ENCODE measurements at regions of chr21 and their contacts with region 1.

Region 1: DNA sequence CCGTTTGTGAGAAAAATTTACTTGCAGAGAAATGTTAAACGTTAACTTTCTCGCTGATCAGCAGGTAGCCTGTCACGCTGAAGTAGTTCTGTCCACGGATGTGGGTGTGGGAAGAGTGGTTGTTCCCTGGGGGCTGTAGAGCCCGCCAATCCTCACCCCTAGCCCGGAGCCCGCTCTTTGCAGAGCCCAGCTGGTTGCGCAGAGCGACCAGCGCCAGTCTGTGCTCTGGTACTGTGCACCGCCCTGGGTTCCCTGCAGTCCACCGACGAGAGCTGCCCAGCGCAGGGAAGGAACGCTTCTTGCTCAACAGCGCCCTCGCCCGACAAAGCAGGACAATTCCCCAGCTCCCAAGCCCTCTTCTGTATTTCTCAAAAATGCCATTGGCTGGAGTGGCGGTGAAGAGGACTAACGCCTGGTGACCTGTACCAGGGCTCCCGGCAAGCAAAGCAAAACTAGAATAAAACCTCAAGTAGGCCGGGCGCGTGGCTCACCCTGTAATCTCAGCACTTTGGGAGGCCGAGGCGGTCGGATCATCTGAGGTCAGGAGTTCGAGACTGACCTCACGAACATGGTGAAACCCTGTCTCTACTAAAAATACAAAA is 3.3 kb downstream of the RIPPLY3 start:
- DNase-seq: peak; percentile 42 to 77 (median 71)
- ATAC-seq: peak; percentile 94
- H3K4me3 ChIP-seq: no peak overlapping the region
- H3K4me3 Mint-ChIP-seq: peak overlapping the region; percentile 45 to 80 (median 69)
- H3K27ac ChIP-seq: no peak overlapping the region
- H3K27ac Mint-ChIP-seq: no peak overlapping the region
- H3K4me1 ChIP-seq: peaks cover 4 to 7% of the 10 kb centered on the region in 2 donors
- H3K4me1 Mint-ChIP-seq: peaks cover 0 to 19% (median 16%) of the 10 kb centered on the region in 7 donors
- H3K27me3 ChIP-seq: no peaks in the 10 kb centered on the region
- H3K27me3 Mint-ChIP-seq: peaks cover 43 to 51% (median 47%) of the 10 kb centered on the region in 5 donors

Region 2: DNA sequence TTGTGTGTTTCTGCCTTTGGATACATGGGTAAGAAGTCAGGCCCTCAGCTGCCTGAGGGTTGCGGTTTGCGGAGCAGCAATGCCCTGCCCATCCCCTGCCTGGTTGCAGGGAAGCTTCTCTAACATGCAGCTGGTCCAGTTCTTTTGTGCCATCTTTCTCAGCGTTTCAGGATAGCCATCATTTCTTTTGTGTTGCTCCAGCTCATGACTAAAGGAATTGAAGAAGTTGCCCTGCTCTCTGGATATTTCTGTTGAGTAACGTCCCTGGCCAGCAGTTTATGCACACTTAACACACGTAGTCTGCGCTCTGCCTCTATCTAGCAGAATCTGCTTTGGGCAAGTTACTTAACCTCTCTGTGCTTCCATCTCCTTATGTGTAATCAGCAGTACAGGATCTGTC is 791.1 kb before region 1 on chr21:
- CTCF ChIA-PET with region 1: no interaction called
- POLR2A ChIA-PET with region 1: no interaction called
- intact Hi-C with region 1: no loop called
- DNase-seq: no peak
- ATAC-seq: no peak
- H3K4me3 ChIP-seq: no peak overlapping the region
- H3K4me3 Mint-ChIP-seq: no peak overlapping the region
- H3K27ac ChIP-seq: no peak overlapping the region
- H3K27ac Mint-ChIP-seq: peak overlapping the region in 1 of 9 donors; percentile 73
- H3K4me1 ChIP-seq: no peaks in the 10 kb centered on the region
- H3K4me1 Mint-ChIP-seq: no peaks in the 10 kb centered on the region
- H3K27me3 ChIP-seq: no peaks in the 10 kb centered on the region
- H3K27me3 Mint-ChIP-seq: no peaks in the 10 kb centered on the region

Region 3: GRCh38 chr21:36630485-36631206 is 379.2 kb before region 1 on chr21:
- CTCF ChIA-PET with region 1: interaction called, 5 read pairs
- POLR2A ChIA-PET with region 1: no interaction called
- intact Hi-C with region 1: loop called (anchors 2 to 10 kb)
- DNase-seq: peak in 8 of 9 donors; percentile 14 to 57 (median 41)
- ATAC-seq: peak; percentile 54
- H3K4me3 ChIP-seq: no peak overlapping the region
- H3K4me3 Mint-ChIP-seq: no peak overlapping the region
- H3K27ac ChIP-seq: no peak overlapping the region
- H3K27ac Mint-ChIP-seq: no peak overlapping the region
- H3K4me1 ChIP-seq: no peaks in the 10 kb centered on the region
- H3K4me1 Mint-ChIP-seq: no peaks in the 10 kb centered on the region
- H3K27me3 ChIP-seq: no peaks in the 10 kb centered on the region
- H3K27me3 Mint-ChIP-seq: peaks cover 0 to 6% (median 3%) of the 10 kb centered on the region in 5 donors

Region 4: DNA sequence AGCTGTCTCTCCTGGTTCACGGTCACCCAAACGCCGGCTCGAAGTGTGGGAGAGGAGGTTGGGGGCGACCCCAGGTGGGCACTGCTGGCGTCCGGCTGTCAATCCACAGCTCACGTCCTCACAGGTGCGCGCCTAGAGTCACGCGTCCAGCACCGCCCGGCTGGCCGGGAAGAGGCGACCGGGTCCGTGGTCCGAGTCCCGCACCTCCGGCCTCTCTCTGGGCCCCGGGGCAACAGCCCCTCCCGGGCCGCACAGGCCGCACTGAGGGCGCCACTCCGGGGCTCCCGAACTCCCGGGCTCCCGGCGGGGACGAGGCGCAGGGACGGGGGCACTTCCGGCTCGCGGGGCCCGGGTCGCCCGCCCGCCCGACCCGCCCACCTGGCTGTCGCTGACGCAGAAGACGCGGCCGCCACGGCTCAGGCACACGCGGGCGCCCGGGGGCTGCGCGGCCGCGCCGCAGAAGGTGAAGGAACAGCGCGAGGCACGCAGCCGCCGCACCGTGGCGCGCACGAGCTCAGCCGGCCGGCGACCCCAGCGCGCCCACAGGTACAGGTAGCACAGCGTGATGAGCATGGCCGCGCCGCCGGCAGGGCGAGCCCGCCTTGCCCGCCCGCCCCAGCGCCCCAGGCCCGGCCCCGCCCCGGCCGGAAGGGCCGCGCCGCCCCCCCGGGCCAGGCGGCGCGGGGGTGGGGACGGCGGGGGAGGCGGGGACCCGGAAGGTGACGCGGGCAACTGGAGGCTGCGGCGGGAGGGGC is 43.6 kb before region 1 on chr21 and contains the start of gene HLCS:
- CTCF ChIA-PET with region 1: interaction called, 4 read pairs
- POLR2A ChIA-PET with region 1: interaction called, 5 read pairs
- intact Hi-C with region 1: loop called (anchors 1 to 5 kb)
- DNase-seq: peak; percentile 62 to 79 (median 72)
- ATAC-seq: peak; percentile 93
- H3K4me3 ChIP-seq: peak within 1 kb of the TSS; percentile 52
- H3K4me3 Mint-ChIP-seq: peak within 1 kb of the TSS; percentile 80 to 91 (median 85)
- H3K27ac ChIP-seq: peak within 1 kb of the TSS; percentile 75
- H3K27ac Mint-ChIP-seq: peak within 1 kb of the TSS; percentile 77 to 92 (median 91)
- H3K4me1 ChIP-seq: peaks cover 0 to 6% of the 10 kb centered on the region in 2 donors
- H3K4me1 Mint-ChIP-seq: peaks cover 8 to 25% (median 12%) of the 10 kb centered on the region in 7 donors
- H3K27me3 ChIP-seq: no peaks in the 10 kb centered on the region
- H3K27me3 Mint-ChIP-seq: no peaks in the 10 kb centered on the region
- total RNA-seq, gene HLCS: 8.8 to 19.3 (median 12.2) TPM

Region 5: DNA sequence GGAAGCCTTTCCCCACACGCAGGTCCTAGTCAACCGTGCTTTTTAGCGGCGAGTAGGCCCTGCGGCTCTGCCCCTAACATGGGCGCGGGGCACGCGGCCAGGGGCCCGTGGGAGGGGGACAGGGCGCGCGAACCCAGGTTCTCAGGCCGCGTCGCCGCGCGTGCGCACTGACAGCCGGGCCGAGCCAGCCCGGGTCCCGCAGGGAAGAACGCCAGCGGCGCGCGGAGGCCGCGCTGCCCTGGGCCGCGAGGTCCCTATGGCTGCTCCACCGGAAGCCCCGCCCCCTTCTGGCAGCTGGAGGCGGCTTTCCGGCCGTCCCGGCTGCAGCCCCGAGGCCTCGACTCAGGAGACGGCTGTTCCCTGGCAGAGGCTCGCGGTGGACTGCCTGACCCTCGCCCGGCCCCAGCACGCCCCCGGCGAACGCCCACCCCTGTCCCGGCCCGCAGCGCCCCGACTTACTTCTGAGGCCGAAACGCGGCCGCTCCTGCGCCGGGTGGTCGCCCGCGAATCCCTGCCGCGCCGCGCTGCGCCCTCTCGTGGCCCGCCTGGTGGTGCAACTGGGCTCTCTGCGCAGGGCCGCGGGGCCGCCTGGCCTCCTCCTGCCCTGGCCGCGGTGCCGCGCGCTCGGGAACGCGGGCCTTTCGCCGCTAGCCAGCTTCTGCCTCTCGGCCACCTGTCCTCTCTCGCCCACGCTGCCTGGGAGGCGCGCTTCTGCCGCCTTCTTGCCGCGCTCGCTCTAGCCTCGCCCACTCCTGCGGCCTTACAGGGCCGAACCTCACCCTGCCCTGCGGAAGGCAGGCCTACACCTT is 19.9 kb before region 1 on chr21:
- CTCF ChIA-PET with region 1: interaction called, 6 read pairs
- POLR2A ChIA-PET with region 1: interaction called, 5 read pairs
- intact Hi-C with region 1: loop called in 1 of 2 experiments (anchors 1 kb)
- DNase-seq: peak; percentile 63 to 95 (median 74)
- ATAC-seq: peak; percentile 90
- H3K4me3 ChIP-seq: peak overlapping the region; percentile 66
- H3K4me3 Mint-ChIP-seq: peak overlapping the region; percentile 83 to 95 (median 90)
- H3K27ac ChIP-seq: peak overlapping the region; percentile 69
- H3K27ac Mint-ChIP-seq: peak overlapping the region; percentile 71 to 94 (median 87)
- H3K4me1 ChIP-seq: peaks cover 0 to 4% of the 10 kb centered on the region in 2 donors
- H3K4me1 Mint-ChIP-seq: peaks cover 4 to 36% (median 28%) of the 10 kb centered on the region in 7 donors
- H3K27me3 ChIP-seq: no peaks in the 10 kb centered on the region
- H3K27me3 Mint-ChIP-seq: peaks cover 0 to 3% (median 0%) of the 10 kb centered on the region in 5 donors

Region 6: DNA sequence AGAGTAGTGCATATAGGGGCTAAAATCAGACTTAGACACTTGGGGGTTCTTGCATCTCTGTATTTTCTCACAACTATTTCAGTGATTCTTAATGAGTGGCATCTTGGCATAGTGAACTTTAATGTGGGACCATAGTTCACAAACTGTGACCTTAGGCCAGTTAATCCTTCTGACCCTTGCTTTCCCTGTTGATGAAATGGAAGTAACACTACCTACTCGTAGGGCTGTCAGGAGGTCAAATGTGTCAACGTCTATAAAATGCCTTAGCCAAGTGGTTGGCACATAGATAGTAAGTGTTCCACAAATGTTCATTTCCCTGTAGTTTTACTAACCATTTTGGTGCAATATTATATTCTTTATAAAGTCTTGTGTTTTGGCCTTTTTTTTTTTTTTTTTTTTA is 406.1 kb after region 1 on chr21:
- CTCF ChIA-PET with region 1: no interaction called
- POLR2A ChIA-PET with region 1: no interaction called
- intact Hi-C with region 1: no loop called
- DNase-seq: no peak
- ATAC-seq: no peak
- H3K4me3 ChIP-seq: no peak overlapping the region
- H3K4me3 Mint-ChIP-seq: peak overlapping the region in 8 of 10 donors; percentile 7 to 69 (median 32)
- H3K27ac ChIP-seq: peak overlapping the region; percentile 17
- H3K27ac Mint-ChIP-seq: peak overlapping the region in 7 of 9 donors; percentile 1 to 81 (median 14)
- H3K4me1 ChIP-seq: peaks cover 48 to 59% of the 10 kb centered on the region in 2 donors
- H3K4me1 Mint-ChIP-seq: peaks cover 50 to 99% (median 95%) of the 10 kb centered on the region in 7 donors
- H3K27me3 ChIP-seq: no peaks in the 10 kb centered on the region
- H3K27me3 Mint-ChIP-seq: no peaks in the 10 kb centered on the region

Measured in naive thymus-derived CD4-positive, alpha-beta T cell (primary cell).